ENCODE measurements at regions of chr7 and their contacts with region 1.

Region 1: GRCh38 chr7:28926871-28927597 is 31.1 kb downstream of the TRIL start:
- DNase-seq: peak; percentile 90
- H3K4me3 Mint-ChIP-seq: peak overlapping the region; percentile 86
- H3K27ac Mint-ChIP-seq: peak overlapping the region; percentile 55
- H3K4me1 Mint-ChIP-seq: peaks cover 7% of the 10 kb centered on the region
- H3K27me3 Mint-ChIP-seq: no peaks in the 10 kb centered on the region
- CTCF ChIP-seq: peak; percentile 68

Region 2: GRCh38 chr7:28865601-28866144 is 61.4 kb before region 1 on chr7:
- CTCF ChIA-PET with region 1: no interaction called
- POLR2A ChIA-PET with region 1: no interaction called
- intact Hi-C with region 1: no loop called
- DNase-seq: no peak
- H3K4me3 Mint-ChIP-seq: no peak overlapping the region
- H3K27ac Mint-ChIP-seq: no peak overlapping the region
- H3K4me1 Mint-ChIP-seq: no peaks in the 10 kb centered on the region
- H3K27me3 Mint-ChIP-seq: no peaks in the 10 kb centered on the region
- CTCF ChIP-seq: no peak

Region 3: GRCh38 chr7:28939844-28940544 is 13.0 kb after region 1 on chr7:
- CTCF ChIA-PET with region 1: interaction called, 33 read pairs
- POLR2A ChIA-PET with region 1: interaction called, 4 read pairs
- intact Hi-C with region 1: no loop called
- DNase-seq: no peak
- H3K4me3 Mint-ChIP-seq: no peak overlapping the region
- H3K27ac Mint-ChIP-seq: no peak overlapping the region
- H3K4me1 Mint-ChIP-seq: no peaks in the 10 kb centered on the region
- H3K27me3 Mint-ChIP-seq: no peaks in the 10 kb centered on the region
- CTCF ChIP-seq: no peak

Region 4: GRCh38 chr7:28980451-28980891 is 53.4 kb after region 1 on chr7:
- CTCF ChIA-PET with region 1: interaction called, 10 read pairs
- POLR2A ChIA-PET with region 1: no interaction called
- intact Hi-C with region 1: no loop called
- DNase-seq: no peak
- H3K4me3 Mint-ChIP-seq: no peak overlapping the region
- H3K27ac Mint-ChIP-seq: no peak overlapping the region
- H3K4me1 Mint-ChIP-seq: peaks cover 24% of the 10 kb centered on the region
- H3K27me3 Mint-ChIP-seq: no peaks in the 10 kb centered on the region
- CTCF ChIP-seq: no peak

Region 5: DNA sequence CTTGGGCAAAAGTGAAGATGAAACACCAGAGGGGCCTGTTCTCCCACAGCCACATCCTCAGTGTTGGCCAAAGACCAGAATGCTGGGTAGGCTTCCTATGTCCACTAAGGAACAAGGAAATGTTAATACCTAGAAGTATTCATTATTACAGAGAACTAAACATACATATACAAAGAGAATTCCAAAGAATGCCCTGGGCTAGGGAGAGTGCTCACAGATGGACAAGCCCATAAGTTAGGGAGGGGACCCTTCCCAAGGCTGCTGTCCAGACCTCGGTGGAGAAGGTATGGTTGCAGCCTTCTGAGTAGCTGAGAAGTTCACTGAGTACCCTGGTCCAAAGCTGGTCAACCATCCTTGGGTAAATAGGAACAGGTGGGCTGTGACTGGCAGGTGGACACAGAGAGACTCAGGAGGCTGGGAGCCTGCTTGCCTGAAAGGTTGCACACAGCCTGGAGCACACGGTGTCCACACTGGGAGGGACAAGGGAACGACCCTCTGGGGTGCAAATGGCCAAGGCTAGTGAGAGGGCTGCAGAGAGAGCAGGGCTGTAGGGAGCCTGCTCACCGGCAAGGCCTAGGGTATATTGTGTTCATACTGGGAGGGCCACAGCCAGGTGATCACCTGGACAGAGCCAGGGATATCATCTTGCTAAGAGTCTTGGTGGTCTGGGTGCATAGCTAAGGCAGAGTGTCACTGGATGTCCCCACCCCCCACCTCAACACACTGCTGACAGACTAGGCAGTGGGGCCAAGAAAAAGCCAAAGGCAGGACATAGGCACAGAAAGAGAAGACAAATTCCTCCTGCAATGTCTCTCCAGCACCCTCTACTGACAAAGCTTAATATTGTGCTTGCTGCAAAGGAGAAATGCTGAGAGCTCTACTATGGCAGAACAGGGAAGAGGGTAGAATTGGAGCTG is 179.0 kb after region 1 on chr7:
- CTCF ChIA-PET with region 1: interaction called, 712 read pairs
- POLR2A ChIA-PET with region 1: interaction called, 15 read pairs
- intact Hi-C with region 1: loop called (anchors 1 kb)
- DNase-seq: peak; percentile 72
- H3K4me3 Mint-ChIP-seq: no peak overlapping the region
- H3K27ac Mint-ChIP-seq: peak overlapping the region; percentile 60
- H3K4me1 Mint-ChIP-seq: peaks cover 47% of the 10 kb centered on the region
- H3K27me3 Mint-ChIP-seq: no peaks in the 10 kb centered on the region
- CTCF ChIP-seq: peak; percentile 80

Region 6: GRCh38 chr7:29189743-29190201 is 262.7 kb after region 1 on chr7:
- CTCF ChIA-PET with region 1: interaction called, 97 read pairs
- POLR2A ChIA-PET with region 1: interaction called, 4 read pairs
- intact Hi-C with region 1: loop called (anchors 2 kb)
- DNase-seq: peak; percentile 60
- H3K4me3 Mint-ChIP-seq: no peak overlapping the region
- H3K27ac Mint-ChIP-seq: no peak overlapping the region
- H3K4me1 Mint-ChIP-seq: no peaks in the 10 kb centered on the region
- H3K27me3 Mint-ChIP-seq: no peaks in the 10 kb centered on the region
- CTCF ChIP-seq: peak; percentile 87